ENCODE measurements at regions of chr1 and their contacts with region 1.

Region 1: GRCh38 chr1:226662642-226663326 is 76.3 kb downstream of the ITPKB start:
- DNase-seq: peak; percentile 91
- ATAC-seq: peak; percentile 93
- H3K4me3 Mint-ChIP-seq: peak overlapping the region; percentile 53
- H3K27ac Mint-ChIP-seq: peak overlapping the region; percentile 94
- H3K4me1 Mint-ChIP-seq: no peaks in the 10 kb centered on the region
- H3K27me3 Mint-ChIP-seq: no peaks in the 10 kb centered on the region

Region 2: GRCh38 chr1:226457307-226457712 is 205.5 kb before region 1 on chr1:
- CTCF ChIA-PET with region 1: no interaction called
- POLR2A ChIA-PET with region 1: no interaction called
- intact Hi-C with region 1: no loop called
- DNase-seq: peak; percentile 79
- ATAC-seq: peak; percentile 93
- H3K4me3 Mint-ChIP-seq: peak overlapping the region; percentile 55
- H3K27ac Mint-ChIP-seq: peak overlapping the region; percentile 76
- H3K4me1 Mint-ChIP-seq: peaks cover 12% of the 10 kb centered on the region
- H3K27me3 Mint-ChIP-seq: no peaks in the 10 kb centered on the region

Region 3: GRCh38 chr1:226649780-226650179 is 13.0 kb before region 1 on chr1:
- CTCF ChIA-PET with region 1: interaction called, 11 read pairs
- POLR2A ChIA-PET with region 1: interaction called, 5 read pairs
- intact Hi-C with region 1: loop called (anchors 1 kb)
- DNase-seq: peak; percentile 67
- ATAC-seq: no peak
- H3K4me3 Mint-ChIP-seq: no peak overlapping the region
- H3K27ac Mint-ChIP-seq: peak overlapping the region; percentile 52
- H3K4me1 Mint-ChIP-seq: peaks cover 48% of the 10 kb centered on the region
- H3K27me3 Mint-ChIP-seq: no peaks in the 10 kb centered on the region

Region 4: DNA sequence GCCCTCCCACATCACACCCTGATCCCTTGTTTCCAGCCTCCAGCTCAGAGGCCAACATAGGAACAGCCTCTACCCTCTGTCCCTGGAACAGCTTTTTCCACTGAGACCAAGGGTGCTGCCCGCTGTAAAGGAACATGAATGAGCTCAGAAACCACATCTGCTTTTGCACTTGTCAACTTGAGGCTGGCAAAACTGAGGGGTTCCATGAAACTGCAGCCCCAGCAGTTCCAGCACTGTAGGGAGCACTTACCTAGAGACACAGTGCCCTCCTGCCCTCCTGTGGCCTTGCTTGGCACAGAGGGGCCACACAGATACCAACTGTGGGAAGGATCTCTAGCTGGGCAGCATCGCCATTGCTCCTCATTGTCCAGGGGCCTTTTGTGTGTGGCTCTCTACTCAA is 24.6 kb after region 1 on chr1:
- CTCF ChIA-PET with region 1: interaction called, 43 read pairs
- POLR2A ChIA-PET with region 1: interaction called, 13 read pairs
- intact Hi-C with region 1: loop called in 1 of 2 experiments (anchors 1 kb)
- DNase-seq: peak; percentile 75
- ATAC-seq: peak; percentile 36
- H3K4me3 Mint-ChIP-seq: no peak overlapping the region
- H3K27ac Mint-ChIP-seq: peak overlapping the region; percentile 100
- H3K4me1 Mint-ChIP-seq: peaks cover 100% of the 10 kb centered on the region
- H3K27me3 Mint-ChIP-seq: no peaks in the 10 kb centered on the region

Region 5: DNA sequence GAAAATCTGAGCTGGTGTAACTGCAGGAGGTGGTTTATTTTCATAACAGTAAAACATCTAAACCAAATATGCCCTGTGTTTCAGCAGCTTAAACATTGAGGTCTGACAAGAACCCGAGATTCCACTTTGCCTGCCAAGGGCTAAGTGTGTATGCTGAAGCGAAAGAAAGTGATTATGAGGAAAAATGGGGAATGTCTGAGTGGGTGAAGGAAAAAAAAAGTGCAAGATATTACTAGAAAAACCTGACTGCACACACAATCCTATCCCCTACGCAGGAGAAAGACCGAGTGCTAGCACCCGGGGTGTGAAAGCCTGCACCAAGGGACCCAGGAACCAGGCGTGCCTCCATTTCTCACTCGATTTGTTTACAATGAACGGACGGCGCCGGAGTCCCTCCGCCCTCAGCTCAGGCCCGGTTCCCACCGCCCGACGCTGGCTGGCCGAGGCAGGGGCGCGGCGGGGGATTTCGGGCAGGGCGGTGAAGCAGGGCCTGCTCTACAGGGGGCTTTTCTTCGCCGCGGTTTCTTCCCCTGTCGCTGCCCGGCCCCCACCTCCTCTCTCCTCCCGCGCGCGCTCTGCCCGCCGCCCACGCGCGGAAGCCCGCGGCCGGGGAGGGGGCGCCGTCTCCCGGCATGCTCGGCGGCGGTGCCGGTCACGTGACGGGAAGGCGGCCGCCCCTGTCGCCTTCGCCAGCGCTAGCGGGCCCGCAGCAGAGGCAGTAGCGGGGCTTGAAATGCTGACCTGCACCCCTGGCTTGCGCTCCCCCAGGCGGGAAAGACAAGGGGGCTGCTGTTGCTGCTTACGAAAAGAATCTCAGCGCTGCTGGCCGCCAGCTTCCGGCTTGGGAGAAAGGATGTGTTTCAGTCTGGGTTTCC is 40.4 kb after region 1 on chr1:
- CTCF ChIA-PET with region 1: interaction called, 7 read pairs
- POLR2A ChIA-PET with region 1: interaction called, 4 read pairs
- intact Hi-C with region 1: loop called in 1 of 2 experiments (anchors 1 kb)
- DNase-seq: peak; percentile 90
- ATAC-seq: peak; percentile 61
- H3K4me3 Mint-ChIP-seq: peak overlapping the region; percentile 84
- H3K27ac Mint-ChIP-seq: peak overlapping the region; percentile 97
- H3K4me1 Mint-ChIP-seq: peaks cover 85% of the 10 kb centered on the region
- H3K27me3 Mint-ChIP-seq: no peaks in the 10 kb centered on the region

Region 6: GRCh38 chr1:226908913-226909312 is 246.1 kb after region 1 on chr1:
- CTCF ChIA-PET with region 1: no interaction called
- POLR2A ChIA-PET with region 1: no interaction called
- intact Hi-C with region 1: no loop called
- DNase-seq: no peak
- ATAC-seq: no peak
- H3K4me3 Mint-ChIP-seq: no peak overlapping the region
- H3K27ac Mint-ChIP-seq: no peak overlapping the region
- H3K4me1 Mint-ChIP-seq: no peaks in the 10 kb centered on the region
- H3K27me3 Mint-ChIP-seq: no peaks in the 10 kb centered on the region